ENCODE measurements at regions of chr17 and their contacts with region 1.

Region 1: DNA sequence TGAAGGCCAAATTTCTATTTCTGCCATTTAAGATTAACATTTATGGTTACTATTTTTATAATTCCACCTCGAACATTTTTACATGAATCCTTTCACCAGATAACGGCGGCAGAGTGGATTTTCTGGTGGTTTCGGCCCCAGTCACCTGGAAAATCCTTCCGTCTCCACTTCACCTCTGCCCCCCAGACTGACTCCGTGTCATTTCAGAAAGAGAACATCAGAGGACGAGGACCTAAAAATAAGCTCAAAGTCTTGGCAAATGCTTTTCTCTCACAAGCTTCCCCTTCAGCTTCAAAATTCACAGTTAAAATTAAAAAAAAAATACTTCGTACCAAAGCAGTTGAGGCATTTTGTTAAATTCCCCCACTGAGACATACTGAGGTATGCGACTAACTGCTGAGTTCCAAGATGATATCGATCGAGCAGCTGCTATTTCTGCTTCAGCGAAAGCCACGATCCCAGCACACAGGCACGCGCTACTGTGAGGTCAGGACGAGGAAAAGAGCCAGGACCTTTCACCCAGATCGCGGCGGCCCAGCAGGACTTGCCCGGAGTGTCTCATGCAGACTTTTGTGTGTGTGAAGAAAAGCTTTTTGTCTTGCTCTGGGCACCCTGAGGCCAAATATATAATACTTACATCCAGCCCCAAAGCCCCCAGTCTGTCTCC is 36.8 kb downstream of the ASPA start:
- DNase-seq: peak; percentile 67 to 97 (median 82)

Region 2: GRCh38 chr17:3529817-3530741 is 17.4 kb after region 1 on chr17:
- intact Hi-C with region 1: loop called (anchors 2 kb)
- DNase-seq: peak in 7 of 10 donors; percentile 36 to 95 (median 56)

Measured in posterior cingulate gyrus (tissue), 11 donors.